ENCODE measurements at regions of chr6 and their contacts with region 1.

Region 1: DNA sequence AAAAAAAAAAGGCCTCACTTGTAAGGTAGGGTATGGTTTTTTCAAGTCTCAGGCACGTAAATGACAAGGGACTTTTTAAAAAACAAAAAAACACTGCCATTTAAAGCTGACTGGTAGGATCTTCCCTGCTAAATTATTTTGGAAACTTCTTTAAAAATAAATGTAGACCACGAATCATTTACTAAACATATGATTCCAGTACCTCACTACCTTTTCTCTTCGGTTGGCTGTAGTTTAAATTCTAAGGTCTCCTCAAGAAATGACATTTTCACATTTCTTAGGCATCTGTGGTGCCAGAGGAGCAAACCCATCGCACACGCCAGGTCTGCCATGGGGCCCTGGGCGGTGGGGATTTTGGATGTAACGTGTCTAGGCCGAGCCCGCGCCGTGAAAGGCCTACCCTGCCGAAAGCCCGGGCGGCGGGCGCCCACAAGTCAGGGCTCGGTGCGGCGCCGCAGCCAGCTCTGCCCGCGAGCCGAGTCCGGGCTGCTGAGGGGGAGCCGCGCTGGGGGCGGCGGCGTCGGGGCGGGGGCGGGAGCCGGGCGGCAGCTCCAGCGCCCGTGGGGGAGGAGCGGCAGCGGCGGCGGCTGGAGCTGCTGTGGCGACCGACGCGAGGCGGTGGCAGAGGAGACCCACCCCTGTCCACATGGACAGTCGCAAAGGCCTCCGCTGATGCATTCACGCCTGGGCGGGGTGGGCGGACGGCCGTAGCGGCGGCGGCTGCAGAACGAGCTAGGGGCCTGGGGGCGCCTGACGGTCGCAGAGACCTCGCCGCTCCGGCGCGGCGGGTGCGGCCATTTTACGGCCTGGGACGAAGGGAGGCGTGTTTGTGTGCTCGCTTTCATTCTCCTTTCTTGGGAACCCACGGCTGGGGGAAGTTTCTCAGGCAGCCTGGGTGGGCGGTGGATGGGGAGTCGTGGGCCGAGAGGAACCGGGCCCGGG is at the start of gene SENP6:
- DNase-seq: peak; percentile 65 to 84 (median 80)
- H3K4me3 ChIP-seq: peak within 1 kb of the TSS; percentile 80
- H3K4me3 Mint-ChIP-seq: peak within 1 kb of the TSS; percentile 94 to 99 (median 98)
- H3K27ac ChIP-seq: peak within 1 kb of the TSS; percentile 93
- H3K27ac Mint-ChIP-seq: peak within 1 kb of the TSS; percentile 90 to 99 (median 98)
- H3K4me1 ChIP-seq: peaks cover 58% of the 10 kb centered on the region
- H3K4me1 Mint-ChIP-seq: peaks cover 63 to 81% (median 80%) of the 10 kb centered on the region in 3 donors
- H3K27me3 ChIP-seq: no peaks in the 10 kb centered on the region
- H3K27me3 Mint-ChIP-seq: no peaks in the 10 kb centered on the region
- total RNA-seq, gene SENP6: 74.6 to 77.5 TPM

Region 2: DNA sequence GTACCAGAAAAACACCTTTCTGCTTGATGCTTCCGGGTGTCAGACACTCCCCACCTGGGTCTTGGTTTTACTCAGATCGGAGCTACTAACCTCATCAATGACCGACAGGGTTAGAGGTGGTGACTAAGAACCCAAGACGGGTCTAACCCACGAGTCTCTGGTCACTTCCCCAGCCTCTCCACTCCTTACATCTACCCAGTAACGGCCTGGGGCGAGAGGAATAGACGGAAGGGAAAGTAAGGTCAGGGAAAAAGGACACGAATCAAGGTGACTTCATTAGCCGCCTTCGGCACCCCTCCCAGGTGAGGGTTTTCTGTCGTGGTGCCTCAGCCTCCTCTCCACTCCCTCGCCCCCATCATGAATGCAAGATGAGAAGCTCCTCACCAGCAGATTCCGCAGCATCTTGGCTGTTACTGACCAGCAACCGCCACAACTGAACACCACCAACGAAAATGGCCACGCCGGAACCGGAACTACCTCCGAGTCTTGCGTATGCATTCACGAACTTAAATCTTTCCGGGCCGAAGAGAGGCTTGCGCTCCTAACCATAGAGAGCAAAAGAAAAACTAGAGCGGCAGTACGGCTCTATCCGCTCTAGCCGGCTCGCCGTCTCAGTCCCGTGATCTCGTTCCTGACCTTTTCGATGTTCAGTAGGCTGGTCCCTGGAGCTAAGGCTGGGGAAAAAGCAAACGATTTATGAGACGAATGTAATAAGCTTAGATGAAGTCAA is 358.1 kb before region 1 on chr6 and contains the start of gene COX7A2:
- CTCF ChIA-PET with region 1: no interaction called
- POLR2A ChIA-PET with region 1: interaction called, 10 read pairs
- DNase-seq: peak; percentile 73 to 90 (median 84)
- H3K4me3 ChIP-seq: peak within 1 kb of the TSS; percentile 83
- H3K4me3 Mint-ChIP-seq: peak within 1 kb of the TSS; percentile 97 to 99 (median 98)
- H3K27ac ChIP-seq: peak within 1 kb of the TSS; percentile 84
- H3K27ac Mint-ChIP-seq: peak within 1 kb of the TSS; percentile 95 to 100 (median 99)
- H3K4me1 ChIP-seq: peaks cover 5% of the 10 kb centered on the region
- H3K4me1 Mint-ChIP-seq: peaks cover 27 to 47% (median 34%) of the 10 kb centered on the region in 3 donors
- H3K27me3 ChIP-seq: no peaks in the 10 kb centered on the region
- H3K27me3 Mint-ChIP-seq: peaks cover 4 to 20% of the 10 kb centered on the region in 2 donors
- total RNA-seq, gene COX7A2: 504 to 527 TPM

Region 3: GRCh38 chr6:75284632-75285286 is 316.8 kb before region 1 on chr6 and contains the start of gene TMEM30A:
- CTCF ChIA-PET with region 1: no interaction called
- POLR2A ChIA-PET with region 1: interaction called, 10 read pairs
- DNase-seq: peak; percentile 92 to 97 (median 95)
- H3K4me3 ChIP-seq: peak within 1 kb of the TSS; percentile 91
- H3K4me3 Mint-ChIP-seq: no peak within 1 kb of the TSS
- H3K27ac ChIP-seq: peak within 1 kb of the TSS; percentile 76
- H3K27ac Mint-ChIP-seq: no peak within 1 kb of the TSS
- H3K4me1 ChIP-seq: peaks cover 34% of the 10 kb centered on the region
- H3K4me1 Mint-ChIP-seq: peaks cover 34 to 37% (median 37%) of the 10 kb centered on the region in 3 donors
- H3K27me3 ChIP-seq: no peaks in the 10 kb centered on the region
- H3K27me3 Mint-ChIP-seq: no peaks in the 10 kb centered on the region
- total RNA-seq, gene TMEM30A: 54.8 to 61.8 TPM

Region 4: GRCh38 chr6:75563032-75563431 is 38.5 kb before region 1 on chr6:
- CTCF ChIA-PET with region 1: no interaction called
- POLR2A ChIA-PET with region 1: no interaction called
- DNase-seq: peak in 2 of 5 donors; percentile 2 to 3
- H3K4me3 ChIP-seq: no peak overlapping the region
- H3K4me3 Mint-ChIP-seq: no peak overlapping the region
- H3K27ac ChIP-seq: no peak overlapping the region
- H3K27ac Mint-ChIP-seq: no peak overlapping the region
- H3K4me1 ChIP-seq: no peaks in the 10 kb centered on the region
- H3K4me1 Mint-ChIP-seq: no peaks in the 10 kb centered on the region
- H3K27me3 ChIP-seq: no peaks in the 10 kb centered on the region
- H3K27me3 Mint-ChIP-seq: peaks cover 15 to 57% of the 10 kb centered on the region in 2 donors

Region 5: DNA sequence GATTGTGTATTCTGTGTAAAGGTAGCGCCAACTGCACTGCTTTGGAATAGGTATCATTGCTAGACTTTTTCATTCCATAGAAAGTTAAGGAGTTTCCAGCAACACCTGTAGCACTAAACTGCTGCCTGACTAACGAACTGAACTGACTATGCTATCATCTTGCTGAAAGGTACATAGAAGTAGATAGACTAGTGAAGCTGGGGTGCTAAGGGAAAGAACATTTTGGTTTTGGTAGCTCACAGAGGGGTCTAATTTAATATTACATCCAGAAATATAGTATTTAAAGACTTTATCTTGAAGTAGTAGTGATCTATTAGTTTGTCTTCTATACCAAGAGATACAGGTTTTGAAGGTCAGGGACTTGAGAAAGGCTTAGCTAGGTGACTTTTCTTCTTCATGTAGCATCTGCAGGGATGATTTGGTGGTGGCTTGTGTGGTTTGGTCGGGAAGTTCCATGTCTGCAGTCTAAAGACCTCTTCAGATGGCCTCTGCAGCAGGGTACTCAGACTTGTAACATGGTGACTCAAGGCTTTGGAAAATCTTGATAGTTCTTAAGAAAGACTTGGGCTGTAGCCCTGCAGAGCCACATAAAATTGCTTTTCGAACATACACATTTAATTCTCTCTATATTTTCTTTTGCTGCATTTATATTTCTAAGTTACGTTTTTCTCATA is 10.3 kb after region 1 on chr6:
- CTCF ChIA-PET with region 1: interaction called, 8 read pairs
- POLR2A ChIA-PET with region 1: interaction called, 17 read pairs
- DNase-seq: no peak
- H3K4me3 ChIP-seq: no peak overlapping the region
- H3K4me3 Mint-ChIP-seq: peak overlapping the region; percentile 3 to 84 (median 72)
- H3K27ac ChIP-seq: no peak overlapping the region
- H3K27ac Mint-ChIP-seq: peak overlapping the region; percentile 67 to 91 (median 79)
- H3K4me1 ChIP-seq: peaks cover 69% of the 10 kb centered on the region
- H3K4me1 Mint-ChIP-seq: peaks cover 84 to 94% (median 93%) of the 10 kb centered on the region in 3 donors
- H3K27me3 ChIP-seq: no peaks in the 10 kb centered on the region
- H3K27me3 Mint-ChIP-seq: no peaks in the 10 kb centered on the region

Region 6: GRCh38 chr6:75631859-75632635 is 30.5 kb after region 1 on chr6:
- CTCF ChIA-PET with region 1: no interaction called
- POLR2A ChIA-PET with region 1: no interaction called
- DNase-seq: no peak
- H3K4me3 ChIP-seq: no peak overlapping the region
- H3K4me3 Mint-ChIP-seq: no peak overlapping the region
- H3K27ac ChIP-seq: no peak overlapping the region
- H3K27ac Mint-ChIP-seq: peak overlapping the region in 1 of 8 donors; percentile 6
- H3K4me1 ChIP-seq: no peaks in the 10 kb centered on the region
- H3K4me1 Mint-ChIP-seq: peaks cover 10 to 51% (median 42%) of the 10 kb centered on the region in 3 donors
- H3K27me3 ChIP-seq: no peaks in the 10 kb centered on the region
- H3K27me3 Mint-ChIP-seq: no peaks in the 10 kb centered on the region

Measured in CD8-positive, alpha-beta memory T cell (primary cell).